H1 (cell line): ENCODE measurements at regions of chr4 and their contacts with region 1.

Region 1: DNA sequence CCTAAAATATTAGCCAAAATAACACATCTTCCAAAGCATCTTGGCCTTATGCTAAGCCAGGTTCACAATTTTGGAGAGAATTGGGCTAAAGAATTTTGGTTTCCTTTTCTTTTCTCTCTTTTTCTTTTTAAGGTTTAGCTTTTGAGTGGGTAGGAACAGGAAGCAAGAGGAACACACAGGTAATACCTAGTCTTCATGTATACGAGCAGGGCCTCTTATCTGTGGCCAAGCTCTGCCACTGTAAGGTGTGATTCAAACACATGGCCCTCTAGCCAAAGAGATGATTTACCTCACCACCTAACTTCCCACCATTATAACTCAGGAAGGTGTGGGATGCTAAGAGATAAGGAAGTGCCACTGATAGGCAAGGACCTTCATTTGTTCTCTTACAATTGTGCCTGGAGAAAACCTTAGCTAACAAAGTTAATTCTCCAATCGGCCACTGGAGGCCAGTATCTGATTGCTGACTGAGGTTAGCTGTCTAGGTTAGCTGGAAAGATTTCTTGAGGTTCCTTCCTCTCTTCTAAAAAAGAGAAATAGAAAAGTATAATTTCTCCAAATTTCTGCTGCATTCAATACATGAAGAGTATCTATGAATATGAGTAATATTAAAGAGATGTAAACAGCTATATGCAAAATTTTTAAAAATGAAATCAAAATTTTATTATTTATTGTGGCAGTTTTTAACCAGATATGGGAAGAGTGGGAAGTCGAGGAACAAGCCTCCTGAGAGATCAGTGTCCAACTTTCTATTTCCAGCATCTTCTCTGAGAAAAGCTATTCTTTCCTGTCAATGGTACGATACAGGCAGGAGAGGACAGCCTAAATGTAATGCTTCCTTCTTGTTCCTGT is 30.1 kb upstream of the BBS7 start:
- DNase-seq: peak; percentile 10 to 56
- H3K4me3 ChIP-seq: no peak overlapping the region
- H3K27ac ChIP-seq: no peak overlapping the region
- H3K4me1 ChIP-seq: no peaks in the 10 kb centered on the region
- H3K27me3 ChIP-seq: no peaks in the 10 kb centered on the region
- CTCF ChIP-seq: peak in 2 of 3 experiments; percentile 79 to 82; a peak in 3 of 4 replicates
- EP300 ChIP-seq: no peak
- POLR2A ChIP-seq: no peak
- RAD21 ChIP-seq: peak; percentile 95 to 96

Region 2: GRCh38 chr4:121877041-121877777 is 23.1 kb before region 1 on chr4:
- CTCF ChIA-PET with region 1: interaction called, 11 read pairs
- POLR2A ChIA-PET with region 1: no interaction called
- DNase-seq: no peak
- H3K4me3 ChIP-seq: no peak overlapping the region
- H3K27ac ChIP-seq: no peak overlapping the region
- H3K4me1 ChIP-seq: no peaks in the 10 kb centered on the region; a peak in 1 of 7 replicates
- H3K27me3 ChIP-seq: no peaks in the 10 kb centered on the region
- CTCF ChIP-seq: no peak
- EP300 ChIP-seq: no peak
- POLR2A ChIP-seq: no peak
- RAD21 ChIP-seq: no peak

Region 3: DNA sequence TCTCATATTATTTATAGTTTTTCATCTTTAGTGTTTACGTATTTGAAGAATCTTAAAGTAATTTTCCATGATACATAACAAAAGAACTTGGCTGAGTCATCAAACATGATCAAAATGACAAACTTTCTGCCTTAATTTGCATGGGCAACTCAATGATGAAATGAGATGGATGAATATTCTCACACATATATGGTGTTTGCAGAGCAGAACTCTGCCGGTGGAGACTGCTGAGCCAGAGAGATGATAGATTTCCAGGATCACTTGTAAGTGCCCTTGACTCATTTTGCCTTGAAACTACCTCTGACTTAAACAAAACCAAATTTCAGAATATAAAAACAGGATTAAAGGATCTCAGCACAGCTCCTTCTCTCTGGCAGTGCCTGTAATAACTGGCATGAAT is 13.3 kb after region 1 on chr4:
- CTCF ChIA-PET with region 1: interaction called, 16 read pairs
- POLR2A ChIA-PET with region 1: no interaction called
- DNase-seq: no peak
- H3K4me3 ChIP-seq: no peak overlapping the region
- H3K27ac ChIP-seq: no peak overlapping the region
- H3K4me1 ChIP-seq: no peaks in the 10 kb centered on the region
- H3K27me3 ChIP-seq: no peaks in the 10 kb centered on the region
- CTCF ChIP-seq: no peak
- EP300 ChIP-seq: no peak
- POLR2A ChIP-seq: no peak
- RAD21 ChIP-seq: no peak

Region 4: GRCh38 chr4:121998002-121998401 is 97.6 kb after region 1 on chr4:
- CTCF ChIA-PET with region 1: interaction called, 19 read pairs
- POLR2A ChIA-PET with region 1: no interaction called
- DNase-seq: no peak
- H3K4me3 ChIP-seq: no peak overlapping the region
- H3K27ac ChIP-seq: no peak overlapping the region
- H3K4me1 ChIP-seq: no peaks in the 10 kb centered on the region
- H3K27me3 ChIP-seq: no peaks in the 10 kb centered on the region
- CTCF ChIP-seq: peak; percentile 15 to 64 (median 42); a peak in 3 of 4 replicates
- EP300 ChIP-seq: no peak
- POLR2A ChIP-seq: no peak
- RAD21 ChIP-seq: peak; percentile 73 to 78

Region 5: DNA sequence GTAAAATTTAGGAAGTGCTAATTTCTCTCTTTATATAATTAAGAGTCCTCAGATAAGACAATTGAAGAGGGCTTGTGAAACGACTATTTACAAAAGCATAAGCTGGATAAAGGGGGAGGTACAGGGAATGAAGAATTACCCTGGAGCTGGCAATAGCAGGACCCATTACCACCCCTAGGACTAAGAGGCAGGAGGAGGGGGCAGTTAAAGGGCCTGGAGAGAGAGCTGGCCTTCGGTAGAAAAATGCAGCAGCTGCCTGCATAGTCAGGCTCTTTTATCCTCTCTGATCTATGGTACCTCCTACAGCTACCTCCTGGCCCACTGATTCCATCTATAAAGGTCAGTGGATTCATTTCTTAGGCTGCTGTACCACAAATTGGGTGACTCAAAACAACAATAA is 109.2 kb after region 1 on chr4:
- CTCF ChIA-PET with region 1: interaction called, 12 read pairs
- POLR2A ChIA-PET with region 1: no interaction called
- DNase-seq: no peak
- H3K4me3 ChIP-seq: no peak overlapping the region
- H3K27ac ChIP-seq: no peak overlapping the region
- H3K4me1 ChIP-seq: no peaks in the 10 kb centered on the region
- H3K27me3 ChIP-seq: no peaks in the 10 kb centered on the region
- CTCF ChIP-seq: no peak
- EP300 ChIP-seq: no peak
- POLR2A ChIP-seq: no peak
- RAD21 ChIP-seq: no peak

Region 6: GRCh38 chr4:122086338-122087065 is 186.1 kb after region 1 on chr4:
- CTCF ChIA-PET with region 1: no interaction called
- POLR2A ChIA-PET with region 1: no interaction called
- DNase-seq: no peak
- H3K4me3 ChIP-seq: no peak overlapping the region
- H3K27ac ChIP-seq: no peak overlapping the region
- H3K4me1 ChIP-seq: peaks cover 0 to 3% (median 0%) of the 10 kb centered on the region in 4 experiments; a peak in 1 of 7 replicates
- H3K27me3 ChIP-seq: no peaks in the 10 kb centered on the region
- CTCF ChIP-seq: no peak
- EP300 ChIP-seq: no peak
- POLR2A ChIP-seq: no peak
- RAD21 ChIP-seq: no peak